Activated CD8-positive, alpha-beta T cell treated with anti-CD3 and anti-CD28 coated beads, Interleukin-2, amount 10 ng/mL, durations not matched to agents 7 days and 5 days (primary cell): ENCODE measurements at regions of chr10 and their contacts with region 1.

Region 1: DNA sequence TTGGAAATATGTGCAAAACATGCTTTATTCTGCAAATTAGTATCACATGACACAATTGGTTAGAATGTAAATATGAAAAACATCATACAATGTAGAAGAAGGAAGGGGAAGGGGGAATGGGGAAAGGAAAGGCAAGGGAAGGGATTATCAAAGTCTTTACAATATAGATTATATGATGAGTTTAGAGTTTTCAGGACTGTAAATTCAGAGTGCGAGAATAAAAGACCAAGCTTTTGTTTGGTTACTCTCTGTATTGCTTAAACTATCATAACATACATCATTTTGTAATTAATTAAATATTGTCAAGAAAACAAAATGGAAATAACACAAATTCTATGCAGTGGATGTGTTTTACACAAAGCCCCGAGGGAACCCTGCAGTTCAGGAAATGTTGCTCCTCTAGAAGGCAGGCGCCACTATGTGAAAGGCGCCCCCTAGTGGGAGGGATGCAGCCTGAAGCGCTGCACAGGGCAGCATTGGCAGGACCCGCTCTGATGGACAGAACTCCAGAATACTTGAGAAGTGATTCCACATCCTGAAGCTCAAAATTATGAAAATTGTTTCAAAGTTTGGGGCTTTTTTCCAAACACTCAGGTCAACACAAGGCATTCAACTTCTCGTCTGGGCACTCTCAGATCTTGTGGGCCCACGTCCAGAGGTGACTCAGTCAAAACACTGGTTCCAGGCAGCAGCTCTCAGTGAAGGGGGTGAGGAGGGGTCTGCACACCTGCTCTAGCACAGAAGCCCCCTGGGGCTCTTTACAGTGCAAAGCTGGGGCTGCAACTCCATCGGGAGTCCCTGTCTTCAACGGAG is 31.6 kb upstream of the TMEM254 start:
- DNase-seq: peak; percentile 78
- ATAC-seq: peak; percentile 85
- H3K4me3 Mint-ChIP-seq: no peak overlapping the region
- H3K27ac Mint-ChIP-seq: no peak overlapping the region
- H3K4me1 Mint-ChIP-seq: no peaks in the 10 kb centered on the region
- H3K27me3 Mint-ChIP-seq: peaks cover 4% of the 10 kb centered on the region

Region 2: GRCh38 chr10:79970062-79970461 is 76.8 kb before region 1 on chr10:
- CTCF ChIA-PET with region 1: no interaction called
- POLR2A ChIA-PET with region 1: no interaction called
- DNase-seq: no peak
- ATAC-seq: no peak
- H3K4me3 Mint-ChIP-seq: no peak overlapping the region
- H3K27ac Mint-ChIP-seq: no peak overlapping the region
- H3K4me1 Mint-ChIP-seq: no peaks in the 10 kb centered on the region
- H3K27me3 Mint-ChIP-seq: peaks cover 15% of the 10 kb centered on the region

Region 3: DNA sequence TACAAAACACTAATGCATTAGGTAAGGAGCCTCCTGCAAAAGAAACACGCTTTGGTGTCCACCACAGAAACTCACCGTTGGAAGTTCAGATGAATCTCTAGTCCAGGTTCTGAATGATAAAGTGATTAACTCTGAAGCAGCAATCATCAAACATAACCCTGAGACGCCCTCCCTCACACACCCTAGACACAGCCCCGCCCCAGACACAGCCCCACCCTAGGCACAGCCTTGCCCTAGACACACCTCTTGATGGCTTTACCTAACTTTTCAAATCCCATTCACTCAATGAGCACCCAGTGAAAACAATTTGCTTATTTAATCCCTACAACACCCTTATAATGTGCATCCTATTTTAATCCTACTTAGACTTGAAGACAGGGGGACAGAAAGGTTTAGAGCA is 10.3 kb after region 1 on chr10:
- CTCF ChIA-PET with region 1: interaction called, 17 read pairs
- POLR2A ChIA-PET with region 1: no interaction called
- DNase-seq: no peak
- ATAC-seq: no peak
- H3K4me3 Mint-ChIP-seq: no peak overlapping the region
- H3K27ac Mint-ChIP-seq: no peak overlapping the region
- H3K4me1 Mint-ChIP-seq: peaks cover 2% of the 10 kb centered on the region
- H3K27me3 Mint-ChIP-seq: peaks cover 2% of the 10 kb centered on the region

Region 4: DNA sequence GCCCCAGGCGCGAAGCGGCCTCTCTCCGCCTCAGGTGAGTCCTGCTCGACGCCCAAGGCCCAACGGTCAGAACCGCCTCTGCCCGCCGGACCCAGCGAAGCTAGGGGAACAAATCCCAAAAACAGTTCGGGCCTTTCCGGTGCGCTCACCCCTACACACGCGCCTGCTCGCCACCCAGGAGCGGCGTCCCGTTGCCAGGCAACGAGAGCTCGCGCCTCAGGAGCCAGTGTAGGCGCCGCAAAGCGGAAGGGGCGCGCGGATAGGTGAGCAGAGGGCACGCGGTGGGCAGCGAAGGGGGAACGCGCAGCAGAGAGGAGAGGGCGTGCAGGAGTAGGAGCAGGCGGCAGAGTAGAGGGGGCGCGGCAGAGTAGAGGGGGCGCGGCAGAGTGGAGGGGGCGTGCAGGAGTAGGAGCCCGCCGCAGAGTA is 309.7 kb after region 1 on chr10 and contains the starts of genes DYDC1 and DYDC2:
- CTCF ChIA-PET with region 1: no interaction called
- POLR2A ChIA-PET with region 1: no interaction called
- DNase-seq: peak; percentile 69
- ATAC-seq: peak; percentile 91
- H3K4me3 Mint-ChIP-seq: peak within 1 kb of the TSS; percentile 57
- H3K27ac Mint-ChIP-seq: no peak within 1 kb of the TSS
- H3K4me1 Mint-ChIP-seq: peaks cover 10% of the 10 kb centered on the region
- H3K27me3 Mint-ChIP-seq: peaks cover 41% of the 10 kb centered on the region
- total RNA-seq, gene DYDC1: not detected
- total RNA-seq, gene DYDC2: not detected